Motor neuron (in vitro differentiated cells): ENCODE measurements at regions of chr19 and their contacts with region 1.

Region 1: DNA sequence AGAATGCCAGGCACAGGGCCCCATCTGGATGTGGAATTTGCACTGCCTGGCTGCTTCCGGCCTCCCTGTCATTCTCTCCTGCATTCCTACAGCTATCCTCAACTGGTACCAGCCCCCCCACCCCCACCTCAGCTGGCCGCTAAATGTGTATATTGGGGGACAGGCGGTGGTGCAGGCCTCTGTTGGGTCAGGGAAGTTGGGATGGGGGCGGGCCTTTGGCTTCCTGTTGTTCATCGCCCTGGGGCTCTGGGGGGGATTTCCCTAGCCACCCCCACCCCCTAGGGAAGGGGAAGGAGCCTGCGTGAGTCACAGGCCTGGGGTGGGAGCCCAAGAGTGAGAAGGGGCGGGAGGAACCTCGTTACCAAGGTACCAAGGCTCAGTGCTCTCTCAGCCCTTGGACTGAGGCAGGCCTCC is 10.6 kb downstream of the POU2F2 start:
- ATAC-seq: peak; percentile 66 to 91 (median 79)
- H3K4me3 ChIP-seq: no peak overlapping the region
- H3K27ac ChIP-seq: no peak overlapping the region
- H3K4me1 ChIP-seq: peaks cover 9 to 16% of the 10 kb centered on the region in 2 donors

Region 2: DNA sequence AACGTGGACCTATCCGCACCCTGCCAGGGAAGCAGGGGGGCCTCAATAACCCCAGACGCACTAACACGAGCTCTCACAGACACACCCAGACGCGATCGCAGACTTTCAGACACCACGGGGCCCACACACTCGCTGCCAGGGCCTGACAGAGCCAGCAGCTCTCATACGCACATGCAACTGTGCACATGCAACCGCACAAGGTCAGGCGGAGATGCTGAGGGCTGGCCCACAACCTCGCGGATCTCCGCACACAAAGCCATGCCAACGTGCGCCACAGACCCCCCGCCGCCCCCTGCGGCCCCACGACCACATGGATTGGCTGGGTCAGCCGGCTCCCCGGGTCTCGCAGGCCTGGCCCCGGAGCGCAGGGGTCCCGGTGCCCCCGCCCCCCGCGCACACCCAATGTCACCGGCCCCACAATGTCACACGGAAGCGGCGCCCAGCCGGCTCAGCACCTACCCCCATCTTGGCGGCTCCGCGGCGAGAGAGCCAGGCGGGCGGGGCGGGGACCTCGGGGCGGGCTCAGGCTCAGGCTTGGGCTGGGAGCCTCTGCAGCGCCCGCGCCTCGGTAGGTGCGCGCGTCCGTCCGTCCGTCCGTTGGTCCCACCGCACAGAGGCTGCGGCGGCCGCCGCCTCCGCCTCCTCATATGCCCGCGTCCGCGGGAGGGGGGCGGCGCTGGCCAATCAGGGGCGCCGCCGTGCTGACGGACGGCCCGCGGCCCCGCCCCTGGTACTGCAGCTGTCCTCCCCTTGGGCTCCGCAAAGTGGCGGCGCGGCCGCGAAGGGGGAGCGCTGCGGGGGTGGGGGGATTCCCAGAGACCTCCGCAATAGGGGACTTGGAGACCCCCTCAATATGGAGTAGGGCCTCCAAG is 127.8 kb before region 1 on chr19 and contains the start of gene ATP1A3:
- in situ Hi-C with region 1: no loop called
- ATAC-seq: peak; percentile 44 to 88 (median 54)
- H3K4me3 ChIP-seq: peak within 1 kb of the TSS; percentile 61 to 92 (median 80)
- H3K27ac ChIP-seq: peak within 1 kb of the TSS; percentile 75 to 95
- H3K4me1 ChIP-seq: peaks cover 40 to 53% of the 10 kb centered on the region in 2 donors
- total RNA-seq, gene ATP1A3: 2.4 to 243 (median 117) TPM

Region 3: GRCh38 chr19:42172261-42172660 is 50.6 kb after region 1 on chr19:
- in situ Hi-C with region 1: no loop called
- ATAC-seq: no peak
- H3K4me3 ChIP-seq: no peak overlapping the region
- H3K27ac ChIP-seq: peak overlapping the region in 1 of 2 donors; percentile 76
- H3K4me1 ChIP-seq: peaks cover 69 to 80% of the 10 kb centered on the region in 2 donors

Region 4: DNA sequence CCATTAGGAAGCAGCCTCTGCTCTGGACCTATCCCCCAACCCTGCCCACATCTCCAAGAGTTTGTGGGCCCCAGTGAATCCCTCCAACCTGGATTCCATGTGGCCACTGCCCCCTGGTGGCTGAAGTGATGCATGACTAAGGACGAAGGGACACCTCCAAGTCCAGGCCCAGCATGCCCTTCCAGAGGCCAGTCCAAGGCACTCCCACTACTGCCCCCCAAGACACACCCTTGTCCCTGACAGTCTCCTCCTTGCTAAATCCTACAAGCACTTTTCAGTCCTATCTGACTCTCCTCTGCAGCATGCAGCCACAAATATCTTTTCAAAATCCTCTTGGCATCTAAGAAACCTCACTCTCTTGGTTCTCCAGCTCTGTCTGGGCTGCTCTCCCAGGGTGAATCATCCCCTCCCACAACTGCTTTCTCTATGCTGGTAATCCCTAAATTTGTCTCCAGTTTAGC is 62.8 kb after region 1 on chr19:
- in situ Hi-C with region 1: loop called in 1 of 9 experiments (anchors 10 kb)
- ATAC-seq: peak; percentile 76 to 96 (median 82)
- H3K4me3 ChIP-seq: no peak overlapping the region
- H3K27ac ChIP-seq: no peak overlapping the region
- H3K4me1 ChIP-seq: peaks cover 5 to 15% of the 10 kb centered on the region in 2 donors

Region 5: GRCh38 chr19:42199440-42200115 is 77.9 kb after region 1 on chr19:
- in situ Hi-C with region 1: loop called in 3 of 9 experiments (anchors 10 to 25 kb)
- ATAC-seq: peak in 7 of 8 experiments; percentile 12 to 82 (median 61)
- H3K4me3 ChIP-seq: no peak overlapping the region
- H3K27ac ChIP-seq: no peak overlapping the region
- H3K4me1 ChIP-seq: no peaks in the 10 kb centered on the region